ENCODE measurements at regions of chr7 and their contacts with region 1.

Region 1: GRCh38 chr7:64630496-64630895 is 35.4 kb upstream of the ZNF107 start:
- DNase-seq: peak; percentile 47
- H3K4me3 ChIP-seq: no peak overlapping the region
- H3K27ac ChIP-seq: no peak overlapping the region
- H3K4me1 ChIP-seq: no peaks in the 10 kb centered on the region
- H3K27me3 ChIP-seq: no peaks in the 10 kb centered on the region
- CTCF ChIP-seq: peak; percentile 67
- EP300 ChIP-seq: no peak
- RAD21 ChIP-seq: peak; percentile 63

Region 2: DNA sequence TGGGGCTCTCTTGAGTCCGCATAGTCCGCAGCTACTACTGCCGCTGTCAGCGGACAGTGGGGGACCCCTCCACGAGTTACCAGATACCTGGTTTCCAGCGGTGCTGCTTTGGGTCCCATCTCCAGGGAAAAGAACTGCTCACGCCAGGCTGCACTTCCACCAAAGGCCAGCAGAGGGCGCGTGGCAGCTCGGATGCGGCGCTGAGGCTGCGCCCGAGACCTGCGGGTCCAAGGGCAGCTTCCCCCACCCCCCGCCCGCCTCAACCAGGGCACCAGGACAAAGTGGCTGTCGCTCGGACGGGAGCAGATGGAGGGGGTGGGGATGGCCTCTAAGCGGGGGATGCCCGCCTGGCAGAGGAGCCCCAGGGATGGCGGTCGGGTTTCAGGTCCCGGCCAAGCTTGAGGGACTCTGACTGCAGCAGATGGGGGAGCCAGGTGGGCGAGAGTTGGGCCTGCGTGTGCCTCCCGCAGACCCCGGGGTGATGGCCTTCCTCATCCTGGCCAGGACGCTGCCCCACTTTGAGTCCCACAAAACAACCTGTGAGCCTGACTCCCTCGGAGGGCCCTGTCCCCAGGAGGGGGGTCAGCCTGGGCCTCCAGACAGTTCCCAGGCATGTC is 447.3 kb before region 1 on chr7:
- CTCF ChIA-PET with region 1: interaction called, 178 read pairs
- POLR2A ChIA-PET with region 1: no interaction called
- DNase-seq: peak; percentile 82
- H3K4me3 ChIP-seq: peak overlapping the region; percentile 36 to 44; a peak in 2 of 4 replicates
- H3K27ac ChIP-seq: no peak overlapping the region
- H3K4me1 ChIP-seq: peaks cover 0 to 6% of the 10 kb centered on the region in 2 experiments; a peak in 1 of 4 replicates
- H3K27me3 ChIP-seq: no peaks in the 10 kb centered on the region
- CTCF ChIP-seq: peak; percentile 85
- EP300 ChIP-seq: no peak
- RAD21 ChIP-seq: peak; percentile 71

Region 3: GRCh38 chr7:64599355-64599754 is 31.1 kb before region 1 on chr7:
- CTCF ChIA-PET with region 1: interaction called, 10 read pairs
- POLR2A ChIA-PET with region 1: no interaction called
- DNase-seq: no peak
- H3K4me3 ChIP-seq: no peak overlapping the region
- H3K27ac ChIP-seq: no peak overlapping the region
- H3K4me1 ChIP-seq: no peaks in the 10 kb centered on the region
- H3K27me3 ChIP-seq: no peaks in the 10 kb centered on the region
- CTCF ChIP-seq: no peak
- EP300 ChIP-seq: no peak
- RAD21 ChIP-seq: no peak

Region 4: GRCh38 chr7:64618785-64619456 is 11.6 kb before region 1 on chr7:
- CTCF ChIA-PET with region 1: interaction called, 43 read pairs
- POLR2A ChIA-PET with region 1: no interaction called
- DNase-seq: peak; percentile 53
- H3K4me3 ChIP-seq: no peak overlapping the region
- H3K27ac ChIP-seq: no peak overlapping the region
- H3K4me1 ChIP-seq: no peaks in the 10 kb centered on the region
- H3K27me3 ChIP-seq: no peaks in the 10 kb centered on the region
- CTCF ChIP-seq: peak; percentile 79
- EP300 ChIP-seq: no peak
- RAD21 ChIP-seq: peak; percentile 94

Region 5: GRCh38 chr7:64665980-64666662 is 35.6 kb after region 1 on chr7 and contains the start of gene ZNF107:
- CTCF ChIA-PET with region 1: interaction called, 10 read pairs
- POLR2A ChIA-PET with region 1: no interaction called
- DNase-seq: peak; percentile 89
- H3K4me3 ChIP-seq: peak within 1 kb of the TSS; percentile 85
- H3K27ac ChIP-seq: peak within 1 kb of the TSS; percentile 71 to 86
- H3K4me1 ChIP-seq: peaks cover 5 to 14% of the 10 kb centered on the region in 2 experiments; a peak in 2 of 4 replicates
- H3K27me3 ChIP-seq: no peaks in the 10 kb centered on the region
- CTCF ChIP-seq: no peak
- EP300 ChIP-seq: peak in 1 of 2 experiments; percentile 8; a peak in 1 of 4 replicates
- RAD21 ChIP-seq: 0 out of 2 replicates have a peak, but pooled peaks have one; percentile 0
- polyA plus RNA-seq, gene ZNF107: 1.9 and 2.0 TPM in 2 replicates

Measured in SK-N-SH (cell line).